Caco-2 (cell line): ENCODE measurements at regions of chr11 and their contacts with region 1.

Region 1: GRCh38 chr11:94623120-94623735 is 56.1 kb downstream of the PIWIL4 start:
- DNase-seq: peak; percentile 87 to 92
- H3K4me3 ChIP-seq: no peak overlapping the region
- H3K4me3 Mint-ChIP-seq: no peak overlapping the region
- H3K27ac Mint-ChIP-seq: no peak overlapping the region
- H3K4me1 ChIP-seq: no peaks in the 10 kb centered on the region
- H3K4me1 Mint-ChIP-seq: no peaks in the 10 kb centered on the region
- H3K27me3 ChIP-seq: no peaks in the 10 kb centered on the region
- H3K27me3 Mint-ChIP-seq: no peaks in the 10 kb centered on the region
- CTCF ChIP-seq: peak; percentile 99

Region 2: DNA sequence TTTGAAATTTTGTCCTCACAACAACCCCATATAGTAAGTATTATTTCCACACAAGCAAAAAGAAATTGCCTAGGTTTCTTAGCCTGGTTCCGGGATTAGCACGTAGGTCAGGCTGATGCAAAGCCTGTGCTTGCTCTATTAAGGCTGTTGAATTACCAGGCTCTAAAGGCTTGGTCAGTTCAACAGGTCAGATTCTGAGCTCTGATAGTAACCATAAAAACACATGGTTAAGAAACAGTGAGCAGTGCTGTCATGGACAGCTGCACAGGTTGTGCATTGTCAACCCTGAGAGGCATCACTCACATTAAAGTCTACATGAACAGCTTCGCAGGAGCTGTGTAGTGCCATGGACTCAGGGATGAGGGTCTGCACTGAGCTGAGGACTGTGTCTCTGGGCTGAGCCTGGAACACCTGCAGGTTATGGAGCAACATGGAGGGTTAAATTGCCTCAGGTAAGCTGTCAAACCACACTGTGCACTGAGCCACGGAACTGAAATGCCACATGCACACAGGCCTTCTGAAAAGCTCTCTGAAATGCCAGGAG is 42.0 kb after region 1 on chr11:
- CTCF ChIA-PET with region 1: interaction called, 13 read pairs
- POLR2A ChIA-PET with region 1: no interaction called
- intact Hi-C with region 1: no loop called
- DNase-seq: peak in 1 of 2 experiments; percentile 34
- H3K4me3 ChIP-seq: no peak overlapping the region
- H3K4me3 Mint-ChIP-seq: no peak overlapping the region
- H3K27ac Mint-ChIP-seq: no peak overlapping the region
- H3K4me1 ChIP-seq: peaks cover 30% of the 10 kb centered on the region
- H3K4me1 Mint-ChIP-seq: peaks cover 21% of the 10 kb centered on the region
- H3K27me3 ChIP-seq: no peaks in the 10 kb centered on the region
- H3K27me3 Mint-ChIP-seq: no peaks in the 10 kb centered on the region
- CTCF ChIP-seq: no peak

Region 3: DNA sequence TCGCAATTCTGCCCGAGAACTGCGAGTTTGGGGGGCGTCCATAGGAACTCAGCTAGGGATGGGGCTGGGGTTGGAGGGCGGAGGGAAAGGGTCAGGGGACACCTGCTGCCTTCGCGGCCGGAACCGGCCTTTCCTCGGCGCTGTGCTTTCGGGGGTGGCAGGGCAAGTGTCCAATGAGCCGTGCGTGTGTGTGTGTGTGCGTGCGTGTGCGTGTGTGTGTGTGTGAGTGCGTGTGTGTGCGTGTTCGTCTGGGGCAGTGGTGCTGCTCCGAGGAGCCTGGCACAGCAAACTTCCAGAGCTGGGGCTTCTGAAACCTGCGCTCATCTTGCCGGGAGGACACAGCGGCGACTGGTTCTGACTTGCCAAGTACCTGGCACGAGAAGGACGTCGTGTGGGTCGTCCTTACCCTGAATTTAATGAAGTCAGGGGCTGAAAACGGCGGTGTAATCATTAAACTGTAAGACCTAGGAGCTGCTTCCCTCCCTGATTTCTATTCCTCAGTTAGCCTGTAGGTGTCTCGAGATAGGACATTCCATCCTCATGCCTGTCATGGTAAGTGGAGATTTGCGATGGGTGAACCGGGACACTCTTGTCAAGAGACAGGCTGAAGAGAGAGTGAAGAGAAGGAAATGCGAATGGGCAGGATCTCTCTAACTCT is 117.9 kb after region 1 on chr11:
- CTCF ChIA-PET with region 1: interaction called, 18 read pairs
- POLR2A ChIA-PET with region 1: no interaction called
- intact Hi-C with region 1: loop called (anchors 1 kb)
- DNase-seq: peak; percentile 64 to 69
- H3K4me3 ChIP-seq: no peak overlapping the region
- H3K4me3 Mint-ChIP-seq: no peak overlapping the region
- H3K27ac Mint-ChIP-seq: peak overlapping the region; percentile 48
- H3K4me1 ChIP-seq: peaks cover 54% of the 10 kb centered on the region
- H3K4me1 Mint-ChIP-seq: peaks cover 15% of the 10 kb centered on the region
- H3K27me3 ChIP-seq: no peaks in the 10 kb centered on the region
- H3K27me3 Mint-ChIP-seq: no peaks in the 10 kb centered on the region
- CTCF ChIP-seq: peak; percentile 49 to 64

Region 4: GRCh38 chr11:94786264-94787126 is 163.3 kb after region 1 on chr11:
- CTCF ChIA-PET with region 1: interaction called, 21 read pairs
- POLR2A ChIA-PET with region 1: no interaction called
- intact Hi-C with region 1: loop called (anchors 1 kb)
- DNase-seq: peak in 1 of 2 experiments; percentile 65
- H3K4me3 ChIP-seq: no peak overlapping the region
- H3K4me3 Mint-ChIP-seq: no peak overlapping the region
- H3K27ac Mint-ChIP-seq: peak overlapping the region; percentile 70
- H3K4me1 ChIP-seq: peaks cover 58% of the 10 kb centered on the region
- H3K4me1 Mint-ChIP-seq: peaks cover 24% of the 10 kb centered on the region
- H3K27me3 ChIP-seq: no peaks in the 10 kb centered on the region
- H3K27me3 Mint-ChIP-seq: no peaks in the 10 kb centered on the region
- CTCF ChIP-seq: peak; percentile 75 to 89

Region 5: GRCh38 chr11:94897330-94897768 is 274.1 kb after region 1 on chr11:
- CTCF ChIA-PET with region 1: interaction called, 28 read pairs
- POLR2A ChIA-PET with region 1: no interaction called
- intact Hi-C with region 1: loop called (anchors 1 kb)
- DNase-seq: peak; percentile 69 to 76
- H3K4me3 ChIP-seq: no peak overlapping the region
- H3K4me3 Mint-ChIP-seq: no peak overlapping the region
- H3K27ac Mint-ChIP-seq: no peak overlapping the region
- H3K4me1 ChIP-seq: no peaks in the 10 kb centered on the region
- H3K4me1 Mint-ChIP-seq: no peaks in the 10 kb centered on the region
- H3K27me3 ChIP-seq: no peaks in the 10 kb centered on the region
- H3K27me3 Mint-ChIP-seq: no peaks in the 10 kb centered on the region
- CTCF ChIP-seq: peak; percentile 95 to 99

Region 6: DNA sequence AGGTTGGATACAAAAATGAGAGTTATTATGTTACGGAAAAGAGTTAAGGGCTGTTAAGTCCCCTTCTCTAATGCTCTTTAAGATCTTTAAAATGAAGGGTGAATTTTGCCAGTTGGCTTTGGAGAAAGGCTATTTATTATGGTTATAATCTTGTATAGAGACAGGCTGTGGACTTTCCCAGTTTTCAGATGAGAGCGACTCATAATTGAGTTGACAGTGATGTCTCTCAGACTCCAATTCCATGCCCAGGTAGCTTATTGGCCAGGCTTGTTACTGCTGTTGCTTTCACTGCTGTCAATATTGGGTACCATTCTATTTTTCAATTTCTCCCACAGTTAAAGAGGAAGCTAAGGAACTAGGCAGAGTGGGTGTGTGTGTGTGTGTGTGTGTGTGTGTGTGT is 479.5 kb after region 1 on chr11:
- CTCF ChIA-PET with region 1: interaction called, 10 read pairs
- POLR2A ChIA-PET with region 1: no interaction called
- intact Hi-C with region 1: no loop called
- DNase-seq: no peak
- H3K4me3 ChIP-seq: no peak overlapping the region
- H3K4me3 Mint-ChIP-seq: no peak overlapping the region
- H3K27ac Mint-ChIP-seq: no peak overlapping the region
- H3K4me1 ChIP-seq: peaks cover 5% of the 10 kb centered on the region
- H3K4me1 Mint-ChIP-seq: no peaks in the 10 kb centered on the region
- H3K27me3 ChIP-seq: no peaks in the 10 kb centered on the region
- H3K27me3 Mint-ChIP-seq: no peaks in the 10 kb centered on the region
- CTCF ChIP-seq: no peak